Right cardiac atrium (tissue), 5 donors: ENCODE measurements at regions of chr5 and their contacts with region 1.

Region 1: GRCh38 chr5:177146891-177147638 is 13.5 kb downstream of the NSD1 start:
- DNase-seq: no peak
- ATAC-seq: peak in 1 of 2 donors; percentile 34
- H3K4me3 ChIP-seq: no peak overlapping the region
- H3K27ac ChIP-seq: no peak overlapping the region
- H3K4me1 ChIP-seq: no peaks in the 10 kb centered on the region
- H3K27me3 ChIP-seq: no peaks in the 10 kb centered on the region

Region 2: GRCh38 chr5:176660860-176661641 is 486.0 kb before region 1 on chr5:
- intact Hi-C with region 1: no loop called
- DNase-seq: peak; percentile 79 to 88 (median 86)
- ATAC-seq: peak; percentile 76 to 78
- H3K4me3 ChIP-seq: no peak overlapping the region
- H3K27ac ChIP-seq: no peak overlapping the region
- H3K4me1 ChIP-seq: no peaks in the 10 kb centered on the region
- H3K27me3 ChIP-seq: no peaks in the 10 kb centered on the region

Region 3: GRCh38 chr5:177162379-177162778 is 15.3 kb after region 1 on chr5:
- intact Hi-C with region 1: loop called in 1 of 4 experiments (anchors 2 kb)
- DNase-seq: no peak
- ATAC-seq: no peak
- H3K4me3 ChIP-seq: no peak overlapping the region
- H3K27ac ChIP-seq: no peak overlapping the region
- H3K4me1 ChIP-seq: peaks cover 6% of the 10 kb centered on the region
- H3K27me3 ChIP-seq: no peaks in the 10 kb centered on the region

Region 4: GRCh38 chr5:177209610-177210009 is 62.5 kb after region 1 on chr5:
- intact Hi-C with region 1: loop called in 1 of 4 experiments (anchors 10 kb)
- DNase-seq: no peak
- ATAC-seq: no peak
- H3K4me3 ChIP-seq: no peak overlapping the region
- H3K27ac ChIP-seq: no peak overlapping the region
- H3K4me1 ChIP-seq: no peaks in the 10 kb centered on the region
- H3K27me3 ChIP-seq: no peaks in the 10 kb centered on the region

Region 5: GRCh38 chr5:177327539-177328522 is 180.8 kb after region 1 on chr5:
- intact Hi-C with region 1: no loop called
- DNase-seq: peak; percentile 72 to 84 (median 81)
- ATAC-seq: peak; percentile 90 to 95
- H3K4me3 ChIP-seq: no peak overlapping the region
- H3K27ac ChIP-seq: peak overlapping the region; percentile 39
- H3K4me1 ChIP-seq: no peaks in the 10 kb centered on the region
- H3K27me3 ChIP-seq: no peaks in the 10 kb centered on the region

Region 6: DNA sequence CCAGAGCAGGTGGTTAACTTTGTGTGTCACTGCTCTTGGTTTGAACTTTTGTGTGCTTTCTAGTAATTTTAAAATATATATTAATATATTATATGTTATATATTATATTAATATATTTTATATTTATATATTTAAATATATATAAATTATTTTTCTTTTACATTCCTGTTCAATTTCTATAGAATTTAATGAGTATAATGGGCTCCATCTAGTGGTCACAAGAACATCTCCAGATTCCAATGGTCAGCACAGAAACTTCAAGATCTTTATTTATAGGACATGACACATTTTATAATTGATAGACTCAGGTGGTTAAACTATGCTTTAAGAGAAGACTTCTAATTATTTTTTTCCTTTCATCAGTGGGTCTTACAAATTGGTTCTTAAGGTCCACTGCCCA is 1404.0 kb after region 1 on chr5:
- intact Hi-C with region 1: no loop called
- DNase-seq: no peak
- ATAC-seq: no peak
- H3K4me3 ChIP-seq: no peak overlapping the region
- H3K27ac ChIP-seq: no peak overlapping the region
- H3K4me1 ChIP-seq: no peaks in the 10 kb centered on the region
- H3K27me3 ChIP-seq: no peaks in the 10 kb centered on the region